ENCODE measurements at regions of chr2 and their contacts with region 1.

Region 1: GRCh38 chr2:184633726-184634125 is 35.4 kb downstream of the ZNF804A start:
- DNase-seq: no peak
- H3K4me3 ChIP-seq: no peak overlapping the region
- H3K27ac ChIP-seq: no peak overlapping the region
- H3K4me1 ChIP-seq: no peaks in the 10 kb centered on the region; a peak in 1 of 4 replicates
- H3K27me3 ChIP-seq: no peaks in the 10 kb centered on the region
- CTCF ChIP-seq: no peak
- EP300 ChIP-seq: no peak
- RAD21 ChIP-seq: no peak

Region 2: DNA sequence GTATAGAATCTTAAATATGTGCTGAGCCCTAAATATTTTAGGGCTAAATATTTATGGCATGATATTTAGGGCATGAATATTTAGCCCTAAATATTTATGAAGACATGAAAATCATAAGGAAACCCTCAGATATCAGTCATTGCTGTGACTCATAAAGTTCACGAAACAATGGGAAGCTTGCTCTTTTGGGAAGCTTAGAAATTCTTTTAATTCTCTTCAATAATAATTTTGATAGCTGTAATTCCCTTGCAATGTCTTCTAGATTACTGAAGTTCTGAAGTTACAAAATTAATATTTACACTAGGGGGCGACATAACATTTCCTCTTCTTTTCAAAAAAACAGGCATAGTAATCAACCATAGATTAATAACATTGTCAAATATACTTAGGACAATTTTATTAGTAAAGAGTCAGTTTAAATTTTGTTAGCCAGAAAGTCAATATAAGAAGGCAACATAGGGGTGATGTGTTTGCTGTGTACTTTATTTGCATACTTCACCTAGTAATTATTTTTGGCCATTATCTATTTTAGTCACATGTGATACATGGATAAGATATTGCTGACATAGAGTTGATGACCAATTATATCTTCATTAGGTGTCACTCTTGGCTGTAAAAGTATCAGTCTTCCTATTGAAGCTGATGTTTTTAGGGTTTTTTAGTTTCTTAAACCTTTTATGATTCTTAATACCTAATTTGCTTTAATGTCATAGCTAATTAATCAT is 22.2 kb before region 1 on chr2:
- CTCF ChIA-PET with region 1: interaction called, 10 read pairs
- POLR2A ChIA-PET with region 1: no interaction called
- DNase-seq: peak; percentile 22
- H3K4me3 ChIP-seq: no peak overlapping the region; a peak in 1 of 4 replicates
- H3K27ac ChIP-seq: no peak overlapping the region
- H3K4me1 ChIP-seq: no peaks in the 10 kb centered on the region
- H3K27me3 ChIP-seq: no peaks in the 10 kb centered on the region
- CTCF ChIP-seq: peak; percentile 78
- EP300 ChIP-seq: no peak
- RAD21 ChIP-seq: peak; percentile 68